Tibial artery (tissue), 4 donors: ENCODE measurements at regions of chr3 and their contacts with region 1.

Region 1: GRCh38 chr3:194671900-194672808 is at the start of gene LSG1:
- DNase-seq: peak; percentile 89 to 93
- H3K4me3 ChIP-seq: peak within 1 kb of the TSS; percentile 66 to 91
- H3K27ac ChIP-seq: peak within 1 kb of the TSS; percentile 90
- H3K4me1 ChIP-seq: peaks cover 0 to 24% (median 13%) of the 10 kb centered on the region in 4 donors
- H3K27me3 ChIP-seq: peaks cover 0 to 5% of the 10 kb centered on the region in 2 donors
- CTCF ChIP-seq: no peak

Region 2: GRCh38 chr3:193592944-193593667 is 1079.0 kb before region 1 on chr3 and contains the start of gene OPA1:
- intact Hi-C with region 1: loop called (anchors 2 kb)
- DNase-seq: peak; percentile 96 to 99
- H3K4me3 ChIP-seq: peak within 1 kb of the TSS; percentile 65 to 79
- H3K27ac ChIP-seq: peak within 1 kb of the TSS; percentile 78 to 81
- H3K4me1 ChIP-seq: peaks cover 0 to 26% (median 21%) of the 10 kb centered on the region in 4 donors
- H3K27me3 ChIP-seq: no peaks in the 10 kb centered on the region
- CTCF ChIP-seq: no peak

Region 3: DNA sequence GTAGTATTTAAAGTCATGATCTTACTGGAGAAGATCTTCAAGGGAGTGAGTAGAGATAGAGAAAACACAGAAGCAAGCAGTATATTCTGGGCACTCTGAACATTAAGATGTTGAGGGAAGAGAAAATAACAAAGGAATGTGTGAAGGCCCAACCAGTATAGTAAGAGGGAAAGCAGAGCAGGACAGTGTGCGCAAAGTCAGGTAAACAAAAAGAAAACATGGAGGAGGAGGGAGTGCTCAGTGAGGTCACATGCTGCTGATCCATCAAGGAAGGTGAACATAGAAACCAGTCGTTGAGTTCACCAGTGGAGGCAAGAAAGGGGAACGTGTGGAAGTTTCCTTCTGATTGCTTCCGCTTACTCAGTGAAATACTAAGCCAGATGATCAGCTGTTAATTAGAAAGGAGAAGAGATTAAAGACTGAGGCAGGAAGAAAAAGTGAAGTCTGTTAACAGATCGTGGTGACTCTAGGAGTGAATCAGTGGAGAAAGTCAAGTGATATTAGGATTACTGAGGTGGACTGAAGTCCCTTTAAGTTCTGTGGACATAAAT is 1031.9 kb before region 1 on chr3:
- intact Hi-C with region 1: no loop called
- DNase-seq: no peak
- H3K4me3 ChIP-seq: no peak overlapping the region
- H3K27ac ChIP-seq: no peak overlapping the region
- H3K4me1 ChIP-seq: no peaks in the 10 kb centered on the region
- H3K27me3 ChIP-seq: no peaks in the 10 kb centered on the region
- CTCF ChIP-seq: no peak